Sigmoid colon (tissue), 7 donors: ENCODE measurements at regions of chr12 and their contacts with region 1.

Region 1: GRCh38 chr12:126523891-126524290 is 1458.7 kb downstream of the AACS start:
- DNase-seq: no peak
- H3K4me3 ChIP-seq: no peak overlapping the region
- H3K27ac ChIP-seq: no peak overlapping the region
- H3K4me1 ChIP-seq: no peaks in the 10 kb centered on the region
- H3K27me3 ChIP-seq: peaks cover 0 to 2% (median 0%) of the 10 kb centered on the region in 3 donors
- CTCF ChIP-seq: no peak
- EP300 ChIP-seq: no peak
- POLR2A ChIP-seq: no peak

Region 2: GRCh38 chr12:126570566-126570965 is 46.7 kb after region 1 on chr12:
- intact Hi-C with region 1: loop called (anchors 2 kb)
- DNase-seq: no peak
- H3K4me3 ChIP-seq: no peak overlapping the region
- H3K27ac ChIP-seq: no peak overlapping the region
- H3K4me1 ChIP-seq: no peaks in the 10 kb centered on the region
- H3K27me3 ChIP-seq: no peaks in the 10 kb centered on the region
- CTCF ChIP-seq: no peak
- EP300 ChIP-seq: no peak
- POLR2A ChIP-seq: no peak